PC-9 (cell line): ENCODE measurements at regions of chr3 and their contacts with region 1.

Region 1: DNA sequence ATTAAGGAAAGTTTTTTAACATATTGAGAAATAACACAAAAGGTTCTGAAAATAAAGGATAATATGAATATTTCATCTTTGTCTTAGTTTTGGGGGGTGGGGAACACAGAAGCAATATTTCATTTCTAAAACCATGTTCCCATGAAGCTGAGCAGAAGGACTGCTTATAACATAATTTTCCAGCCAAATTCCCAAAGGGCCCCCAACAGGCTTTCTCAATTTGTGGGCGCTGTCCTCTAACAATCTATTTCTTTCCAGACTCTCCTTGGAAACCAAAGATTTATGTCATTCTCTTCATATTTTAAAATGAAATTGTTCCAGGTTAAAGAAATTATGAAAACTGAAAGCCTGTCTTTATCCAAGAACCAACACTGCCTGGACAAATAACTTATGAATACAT is 273.5 kb downstream of the ZBTB20 start:
- DNase-seq: no peak
- H3K4me3 ChIP-seq: no peak overlapping the region
- H3K27ac ChIP-seq: no peak overlapping the region
- H3K4me1 ChIP-seq: no peaks in the 10 kb centered on the region
- H3K27me3 ChIP-seq: no peaks in the 10 kb centered on the region
- CTCF ChIP-seq: no peak

Region 2: GRCh38 chr3:114746502-114746901 is 127.1 kb before region 1 on chr3:
- CTCF ChIA-PET with region 1: no interaction called
- POLR2A ChIA-PET with region 1: no interaction called
- intact Hi-C with region 1: no loop called
- DNase-seq: no peak
- H3K4me3 ChIP-seq: no peak overlapping the region
- H3K27ac ChIP-seq: no peak overlapping the region
- H3K4me1 ChIP-seq: no peaks in the 10 kb centered on the region
- H3K27me3 ChIP-seq: no peaks in the 10 kb centered on the region
- CTCF ChIP-seq: no peak

Region 3: GRCh38 chr3:114816052-114816451 is 57.5 kb before region 1 on chr3:
- CTCF ChIA-PET with region 1: no interaction called
- POLR2A ChIA-PET with region 1: interaction called, 10 read pairs
- intact Hi-C with region 1: no loop called
- DNase-seq: no peak
- H3K4me3 ChIP-seq: no peak overlapping the region
- H3K27ac ChIP-seq: no peak overlapping the region
- H3K4me1 ChIP-seq: no peaks in the 10 kb centered on the region
- H3K27me3 ChIP-seq: no peaks in the 10 kb centered on the region
- CTCF ChIP-seq: no peak

Region 4: GRCh38 chr3:114928989-114929640 is 55.5 kb after region 1 on chr3:
- CTCF ChIA-PET with region 1: no interaction called
- POLR2A ChIA-PET with region 1: no interaction called
- intact Hi-C with region 1: no loop called
- DNase-seq: no peak
- H3K4me3 ChIP-seq: no peak overlapping the region
- H3K27ac ChIP-seq: no peak overlapping the region
- H3K4me1 ChIP-seq: no peaks in the 10 kb centered on the region
- H3K27me3 ChIP-seq: no peaks in the 10 kb centered on the region
- CTCF ChIP-seq: no peak

Region 5: GRCh38 chr3:115004201-115005140 is 130.9 kb after region 1 on chr3:
- CTCF ChIA-PET with region 1: no interaction called
- POLR2A ChIA-PET with region 1: no interaction called
- intact Hi-C with region 1: no loop called
- DNase-seq: no peak
- H3K4me3 ChIP-seq: no peak overlapping the region
- H3K27ac ChIP-seq: no peak overlapping the region
- H3K4me1 ChIP-seq: no peaks in the 10 kb centered on the region
- H3K27me3 ChIP-seq: no peaks in the 10 kb centered on the region
- CTCF ChIP-seq: no peak